Dorsolateral prefrontal cortex (tissue), 120 donors: ENCODE measurements at regions of chr3 and their contacts with region 1.

Region 1: GRCh38 chr3:42701142-42702065 is 1.2 kb downstream of the HHATL start:
- DNase-seq: peak; percentile 52 to 90 (median 85)
- H3K4me3 ChIP-seq: peak overlapping the region; percentile 24 to 72 (median 57)
- H3K27ac ChIP-seq: peak overlapping the region; percentile 87 to 100 (median 98)
- H3K27me3 ChIP-seq: no peaks in the 10 kb centered on the region
- CTCF ChIP-seq: peak in 38 of 56 donors; percentile 6 to 55 (median 21)

Region 2: DNA sequence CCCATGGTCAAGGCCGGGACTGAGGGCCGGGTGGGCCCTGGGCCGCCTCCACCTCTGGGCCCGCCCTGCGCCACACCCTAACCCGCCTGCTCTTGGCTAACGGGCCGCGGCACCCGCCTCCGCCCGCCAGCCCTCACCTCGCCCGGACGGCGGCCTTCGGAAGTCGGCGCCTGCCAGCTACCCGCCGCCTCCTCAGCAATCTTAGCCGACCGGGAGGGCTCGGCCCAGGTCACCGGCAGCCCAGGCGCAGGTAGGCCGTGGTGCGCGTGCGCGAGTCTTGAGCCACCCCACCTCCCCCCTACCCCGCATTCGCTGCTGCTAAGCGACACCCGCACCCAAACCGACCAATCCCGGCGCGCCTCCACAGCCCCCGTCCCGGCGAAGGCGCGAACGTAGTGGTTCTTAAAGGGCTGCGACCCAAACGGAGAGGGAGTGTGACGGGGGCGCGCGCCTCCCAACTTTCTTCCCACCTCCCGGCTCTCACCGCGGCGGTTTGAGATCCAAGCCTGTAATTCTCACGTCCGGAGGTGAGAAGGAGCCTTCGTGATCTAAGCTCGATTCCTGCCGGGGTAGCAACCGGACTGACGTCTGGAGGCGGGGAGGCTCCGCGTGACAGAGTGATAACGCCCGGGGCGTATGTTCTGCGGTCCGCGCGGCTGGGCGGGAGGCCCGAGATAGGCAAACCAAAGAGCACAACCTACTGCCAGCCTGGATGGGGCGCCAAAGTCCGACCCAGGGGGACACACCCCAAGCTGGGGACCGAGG is 119.5 kb before region 1 on chr3 and contains the start of gene SEC22C:
- intact Hi-C with region 1: no loop called
- DNase-seq: peak; percentile 92 to 99 (median 96)
- H3K4me3 ChIP-seq: peak within 1 kb of the TSS; percentile 64 to 100 (median 94)
- H3K27ac ChIP-seq: peak within 1 kb of the TSS; percentile 34 to 96 (median 84)
- H3K27me3 ChIP-seq: no peaks in the 10 kb centered on the region
- CTCF ChIP-seq: peak in 24 of 56 donors; percentile 6 to 46 (median 26)
- total RNA-seq, gene SEC22C: 37.5 to 76.6 (median 57.6) TPM

Region 3: DNA sequence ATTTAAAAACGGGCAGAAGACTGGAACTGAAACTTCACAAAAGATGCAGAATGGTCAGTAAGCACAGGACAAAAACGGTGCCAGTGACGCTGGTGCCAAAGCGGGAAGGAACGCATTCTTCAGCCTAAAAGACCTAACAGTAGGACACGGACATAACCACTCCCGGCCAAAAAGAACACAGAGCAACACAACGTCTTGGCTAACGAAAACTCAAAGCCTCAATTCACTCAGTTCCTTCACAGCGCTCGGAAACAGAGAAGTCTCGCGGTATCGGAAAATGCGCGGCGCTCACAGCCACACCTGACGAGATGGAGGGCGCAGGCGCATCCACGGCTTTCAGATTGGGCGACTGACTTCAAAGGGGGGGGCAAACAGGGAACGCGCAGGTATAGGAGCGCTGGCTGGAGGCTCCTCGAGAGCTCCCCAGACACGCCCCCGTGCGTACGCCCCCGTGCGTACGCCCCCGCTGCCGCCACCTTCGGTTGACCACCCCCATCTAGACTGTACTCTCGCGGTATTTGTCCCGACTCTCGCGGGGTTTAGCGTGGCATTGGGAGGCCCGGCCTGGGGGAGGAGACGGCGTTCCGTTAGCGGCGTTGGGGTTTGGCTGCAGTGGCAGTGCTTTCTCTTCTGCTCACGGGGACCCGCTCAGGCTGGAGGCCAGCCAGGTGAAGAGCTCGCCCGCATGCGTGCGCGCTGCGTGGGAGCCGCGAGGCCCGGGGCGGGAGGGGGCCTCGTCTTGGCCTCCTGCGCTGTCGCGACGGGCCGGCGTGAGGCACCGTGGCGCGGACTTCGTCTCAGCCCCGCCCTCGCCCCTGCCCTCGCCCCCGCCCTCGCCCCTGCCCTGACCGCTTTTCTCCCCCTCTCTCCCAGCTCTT is 101.1 kb before region 1 on chr3 and contains the start of gene NKTR:
- intact Hi-C with region 1: loop called in 1 of 2 experiments (anchors 5 kb)
- DNase-seq: peak; percentile 87 to 97 (median 94)
- H3K4me3 ChIP-seq: peak within 1 kb of the TSS; percentile 67 to 97 (median 88)
- H3K27ac ChIP-seq: peak within 1 kb of the TSS; percentile 68 to 99 (median 96)
- H3K27me3 ChIP-seq: no peaks in the 10 kb centered on the region
- CTCF ChIP-seq: peak in 44 of 56 donors; percentile 2 to 58 (median 35)
- total RNA-seq, gene NKTR: 64.0 to 154 (median 107) TPM

Region 4: GRCh38 chr3:42652611-42653302 is 48.6 kb before region 1 on chr3:
- intact Hi-C with region 1: loop called in 1 of 2 experiments (anchors 2 kb)
- DNase-seq: peak in 6 of 10 donors; percentile 54 to 77 (median 62)
- H3K4me3 ChIP-seq: peak overlapping the region; percentile 65 to 99 (median 90)
- H3K27ac ChIP-seq: peak overlapping the region; percentile 39 to 99 (median 95)
- H3K27me3 ChIP-seq: no peaks in the 10 kb centered on the region
- CTCF ChIP-seq: no peak

Region 5: DNA sequence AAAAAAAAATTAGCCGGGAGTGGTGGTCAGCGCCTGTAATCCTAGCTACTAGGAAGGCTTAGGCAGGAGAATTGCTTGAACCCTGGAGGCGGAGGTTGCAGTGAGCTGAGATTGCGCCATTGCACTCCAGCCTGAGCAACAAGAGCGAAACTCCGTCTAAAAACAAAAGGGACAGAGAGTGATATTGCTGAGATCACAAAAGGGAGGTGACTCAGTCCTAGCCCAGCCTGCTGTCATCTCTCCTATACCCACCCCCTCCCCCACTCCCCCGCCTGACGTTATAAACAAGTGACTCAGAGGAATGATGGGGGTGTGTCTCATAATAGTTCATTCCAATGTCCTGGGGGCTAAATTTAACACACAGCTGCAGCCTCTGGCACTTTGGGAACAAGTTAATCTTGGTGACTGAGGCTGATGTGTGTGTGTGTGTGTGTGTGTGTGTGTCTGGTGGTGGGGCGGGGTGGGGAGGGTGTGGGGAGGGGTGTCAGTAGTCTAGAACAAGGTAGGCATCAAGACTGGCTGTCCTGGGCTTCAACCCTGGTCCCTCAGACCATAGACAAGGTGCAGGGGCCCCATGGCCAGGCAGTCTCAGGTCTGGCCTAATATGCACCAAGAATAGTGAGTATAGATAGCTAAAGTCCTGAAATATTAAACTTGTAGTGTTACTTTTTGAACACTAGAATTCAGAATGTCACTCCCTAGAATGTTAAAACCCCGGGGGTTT is 17.4 kb before region 1 on chr3:
- intact Hi-C with region 1: loop called in 1 of 2 experiments (anchors 2 kb)
- DNase-seq: peak in 8 of 10 donors; percentile 49 to 89 (median 75)
- H3K4me3 ChIP-seq: peak overlapping the region in 2 of 59 donors; percentile 12 to 16
- H3K27ac ChIP-seq: peak overlapping the region in 58 of 59 donors; percentile 52 to 96 (median 88)
- H3K27me3 ChIP-seq: peaks cover 0 to 4% (median 0%) of the 10 kb centered on the region in 45 donors
- CTCF ChIP-seq: no peak

Region 6: GRCh38 chr3:42719002-42719401 is 17.6 kb after region 1 on chr3:
- intact Hi-C with region 1: loop called in 1 of 2 experiments (anchors 2 kb)
- DNase-seq: peak in 2 of 10 donors; percentile 6 to 12
- H3K4me3 ChIP-seq: no peak overlapping the region
- H3K27ac ChIP-seq: peak overlapping the region in 36 of 59 donors; percentile 0 to 100 (median 51)
- H3K27me3 ChIP-seq: no peaks in the 10 kb centered on the region
- CTCF ChIP-seq: no peak

Region 7: GRCh38 chr3:42739401-42740158 is 38.2 kb after region 1 on chr3:
- intact Hi-C with region 1: loop called (anchors 2 to 5 kb)
- DNase-seq: peak in 9 of 10 donors; percentile 70 to 93 (median 89)
- H3K4me3 ChIP-seq: no peak overlapping the region
- H3K27ac ChIP-seq: peak overlapping the region; percentile 69 to 100 (median 93)
- H3K27me3 ChIP-seq: no peaks in the 10 kb centered on the region
- CTCF ChIP-seq: peak in 1 of 56 donors; percentile 18

Region 8: GRCh38 chr3:42749753-42750231 is 48.4 kb after region 1 on chr3:
- intact Hi-C with region 1: loop called (anchors 2 to 5 kb)
- DNase-seq: peak in 2 of 10 donors; percentile 58 to 59
- H3K4me3 ChIP-seq: no peak overlapping the region
- H3K27ac ChIP-seq: peak overlapping the region in 43 of 59 donors; percentile 5 to 100 (median 60)
- H3K27me3 ChIP-seq: no peaks in the 10 kb centered on the region
- CTCF ChIP-seq: peak in 55 of 56 donors; percentile 46 to 80 (median 68)